B cell (primary cell): ENCODE measurements at regions of chr10 and their contacts with region 1.

Region 1: GRCh38 chr10:68074775-68075549 is at the start of gene HERC4:
- DNase-seq: peak; percentile 96
- ATAC-seq: peak; percentile 88
- H3K4me3 ChIP-seq: peak within 1 kb of the TSS; percentile 83 to 95 (median 90)
- H3K4me3 Mint-ChIP-seq: peak within 1 kb of the TSS; percentile 95
- H3K27ac ChIP-seq: peak within 1 kb of the TSS; percentile 99 to 100
- H3K27ac Mint-ChIP-seq: peak within 1 kb of the TSS; percentile 98
- H3K4me1 ChIP-seq: peaks cover 13 to 33% of the 10 kb centered on the region in 2 donors
- H3K4me1 Mint-ChIP-seq: peaks cover 38% of the 10 kb centered on the region
- H3K27me3 ChIP-seq: no peaks in the 10 kb centered on the region
- H3K27me3 Mint-ChIP-seq: no peaks in the 10 kb centered on the region
- CTCF ChIP-seq: no peak
- total RNA-seq, gene HERC4: 118 and 126 TPM in 2 replicates

Region 2: GRCh38 chr10:67764012-67764822 is 310.7 kb before region 1 on chr10:
- CTCF ChIA-PET with region 1: no interaction called
- POLR2A ChIA-PET with region 1: no interaction called
- intact Hi-C with region 1: loop called (anchors 1 kb)
- DNase-seq: peak; percentile 99
- ATAC-seq: peak; percentile 77
- H3K4me3 ChIP-seq: peak overlapping the region; percentile 74 to 93 (median 92)
- H3K4me3 Mint-ChIP-seq: peak overlapping the region; percentile 91
- H3K27ac ChIP-seq: peak overlapping the region; percentile 84 to 86
- H3K27ac Mint-ChIP-seq: peak overlapping the region; percentile 100
- H3K4me1 ChIP-seq: peaks cover 9 to 20% of the 10 kb centered on the region in 2 donors
- H3K4me1 Mint-ChIP-seq: peaks cover 28% of the 10 kb centered on the region
- H3K27me3 ChIP-seq: no peaks in the 10 kb centered on the region
- H3K27me3 Mint-ChIP-seq: no peaks in the 10 kb centered on the region
- CTCF ChIP-seq: no peak

Region 3: GRCh38 chr10:67849331-67850011 is 225.5 kb before region 1 on chr10:
- CTCF ChIA-PET with region 1: no interaction called
- POLR2A ChIA-PET with region 1: no interaction called
- intact Hi-C with region 1: loop called (anchors 1 kb)
- DNase-seq: peak; percentile 93
- ATAC-seq: peak; percentile 99
- H3K4me3 ChIP-seq: peak overlapping the region; percentile 79 to 98 (median 96)
- H3K4me3 Mint-ChIP-seq: peak overlapping the region; percentile 97
- H3K27ac ChIP-seq: peak overlapping the region; percentile 89 to 91
- H3K27ac Mint-ChIP-seq: peak overlapping the region; percentile 97
- H3K4me1 ChIP-seq: peaks cover 5 to 9% of the 10 kb centered on the region in 2 donors
- H3K4me1 Mint-ChIP-seq: peaks cover 8% of the 10 kb centered on the region
- H3K27me3 ChIP-seq: no peaks in the 10 kb centered on the region
- H3K27me3 Mint-ChIP-seq: no peaks in the 10 kb centered on the region
- CTCF ChIP-seq: no peak

Region 4: GRCh38 chr10:67884313-67884841 is 190.6 kb before region 1 on chr10 and contains the start of gene SIRT1:
- CTCF ChIA-PET with region 1: no interaction called
- POLR2A ChIA-PET with region 1: interaction called, 3 read pairs
- intact Hi-C with region 1: loop called (anchors 1 kb)
- DNase-seq: peak; percentile 97
- ATAC-seq: peak; percentile 78
- H3K4me3 ChIP-seq: peak within 1 kb of the TSS; percentile 74 to 89 (median 79)
- H3K4me3 Mint-ChIP-seq: peak within 1 kb of the TSS; percentile 90
- H3K27ac ChIP-seq: peak within 1 kb of the TSS; percentile 82 to 90
- H3K27ac Mint-ChIP-seq: peak within 1 kb of the TSS; percentile 99
- H3K4me1 ChIP-seq: peaks cover 5 to 19% of the 10 kb centered on the region in 2 donors
- H3K4me1 Mint-ChIP-seq: peaks cover 34% of the 10 kb centered on the region
- H3K27me3 ChIP-seq: no peaks in the 10 kb centered on the region
- H3K27me3 Mint-ChIP-seq: no peaks in the 10 kb centered on the region
- CTCF ChIP-seq: no peak
- total RNA-seq, gene SIRT1: 66.5 and 67.8 TPM in 2 replicates

Region 5: DNA sequence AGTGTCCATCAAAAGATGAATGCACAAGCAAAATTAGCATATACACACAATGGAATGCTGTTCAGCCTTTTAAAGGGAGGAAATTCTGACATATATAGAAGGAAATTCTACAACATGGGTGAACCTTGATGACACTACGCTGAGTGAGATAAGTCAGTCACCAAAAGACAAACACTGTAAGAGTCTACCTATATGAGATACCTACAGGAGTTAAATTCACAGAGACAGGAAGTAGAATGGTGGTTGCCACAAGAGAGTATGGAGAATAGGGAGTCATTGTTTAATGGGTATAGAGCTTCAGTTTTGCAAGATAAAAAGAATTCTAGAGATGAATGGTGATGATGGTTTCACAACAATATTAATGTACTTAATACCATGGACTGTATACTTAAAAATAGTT is 51.7 kb before region 1 on chr10:
- CTCF ChIA-PET with region 1: no interaction called
- POLR2A ChIA-PET with region 1: no interaction called
- intact Hi-C with region 1: loop called (anchors 10 kb)
- DNase-seq: no peak
- ATAC-seq: no peak
- H3K4me3 ChIP-seq: no peak overlapping the region
- H3K4me3 Mint-ChIP-seq: no peak overlapping the region
- H3K27ac ChIP-seq: peak overlapping the region in 1 of 2 donors; percentile 3
- H3K27ac Mint-ChIP-seq: no peak overlapping the region
- H3K4me1 ChIP-seq: no peaks in the 10 kb centered on the region
- H3K4me1 Mint-ChIP-seq: peaks cover 2% of the 10 kb centered on the region
- H3K27me3 ChIP-seq: no peaks in the 10 kb centered on the region
- H3K27me3 Mint-ChIP-seq: no peaks in the 10 kb centered on the region
- CTCF ChIP-seq: no peak

Region 6: GRCh38 chr10:68526626-68527307 is 451.8 kb after region 1 on chr10:
- CTCF ChIA-PET with region 1: no interaction called
- POLR2A ChIA-PET with region 1: no interaction called
- intact Hi-C with region 1: loop called (anchors 5 kb)
- DNase-seq: no peak
- ATAC-seq: no peak
- H3K4me3 ChIP-seq: peak overlapping the region; percentile 70 to 98 (median 92)
- H3K4me3 Mint-ChIP-seq: peak overlapping the region; percentile 87
- H3K27ac ChIP-seq: peak overlapping the region; percentile 86 to 95
- H3K27ac Mint-ChIP-seq: peak overlapping the region; percentile 91
- H3K4me1 ChIP-seq: peaks cover 6 to 13% of the 10 kb centered on the region in 2 donors
- H3K4me1 Mint-ChIP-seq: peaks cover 17% of the 10 kb centered on the region
- H3K27me3 ChIP-seq: no peaks in the 10 kb centered on the region
- H3K27me3 Mint-ChIP-seq: no peaks in the 10 kb centered on the region
- CTCF ChIP-seq: no peak